T-cell (primary cell): ENCODE measurements at regions of chr6 and their contacts with region 1.

Region 1: DNA sequence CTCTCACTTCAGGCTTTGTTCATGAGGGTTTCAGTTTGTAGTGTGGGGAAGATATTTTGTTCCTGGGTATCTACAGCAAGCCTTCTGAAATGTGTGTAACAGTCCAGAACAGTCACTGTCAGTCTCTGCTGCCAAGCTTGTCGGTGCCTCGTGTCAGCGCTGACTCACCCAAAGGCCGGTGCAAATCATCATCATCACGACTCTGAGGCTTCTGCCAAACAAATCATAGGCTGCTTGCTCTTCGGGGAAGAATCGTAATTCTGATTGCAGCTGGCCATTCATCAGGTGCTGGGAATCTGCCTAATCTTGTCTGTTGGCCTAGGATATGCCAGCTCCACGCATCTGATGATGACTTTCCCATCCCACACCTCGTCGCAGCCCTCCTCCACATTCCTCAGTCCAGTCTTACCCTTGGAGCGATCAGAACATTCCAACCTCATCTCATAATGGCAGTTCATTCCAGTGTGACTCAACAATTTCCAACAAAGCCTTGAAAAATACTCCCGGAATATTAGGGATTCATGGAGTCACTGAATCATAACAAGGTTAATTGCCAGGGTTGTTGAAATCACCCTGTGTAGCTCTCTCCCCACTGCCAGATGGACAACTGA is 40.9 kb downstream of the ALDH8A1 start:
- DNase-seq: no peak
- ATAC-seq: no peak
- H3K4me3 ChIP-seq: no peak overlapping the region
- H3K4me3 Mint-ChIP-seq: no peak overlapping the region
- H3K27ac ChIP-seq: no peak overlapping the region
- H3K27ac Mint-ChIP-seq: no peak overlapping the region
- H3K4me1 ChIP-seq: no peaks in the 10 kb centered on the region
- H3K4me1 Mint-ChIP-seq: no peaks in the 10 kb centered on the region
- H3K27me3 ChIP-seq: peaks cover 0 to 9% of the 10 kb centered on the region in 2 experiments
- H3K27me3 Mint-ChIP-seq: no peaks in the 10 kb centered on the region

Region 2: GRCh38 chr6:135062735-135063134 is 153.7 kb after region 1 on chr6:
- CTCF ChIA-PET with region 1: interaction called in 1 of 2 experiments, 10 read pairs
- POLR2A ChIA-PET with region 1: no interaction called
- DNase-seq: no peak
- ATAC-seq: no peak
- H3K4me3 ChIP-seq: no peak overlapping the region
- H3K4me3 Mint-ChIP-seq: no peak overlapping the region
- H3K27ac ChIP-seq: no peak overlapping the region
- H3K27ac Mint-ChIP-seq: no peak overlapping the region
- H3K4me1 ChIP-seq: no peaks in the 10 kb centered on the region
- H3K4me1 Mint-ChIP-seq: no peaks in the 10 kb centered on the region
- H3K27me3 ChIP-seq: no peaks in the 10 kb centered on the region
- H3K27me3 Mint-ChIP-seq: no peaks in the 10 kb centered on the region